Endothelial cell of umbilical vein (primary cell): ENCODE measurements at regions of chr6 and their contacts with region 1.

Region 1: DNA sequence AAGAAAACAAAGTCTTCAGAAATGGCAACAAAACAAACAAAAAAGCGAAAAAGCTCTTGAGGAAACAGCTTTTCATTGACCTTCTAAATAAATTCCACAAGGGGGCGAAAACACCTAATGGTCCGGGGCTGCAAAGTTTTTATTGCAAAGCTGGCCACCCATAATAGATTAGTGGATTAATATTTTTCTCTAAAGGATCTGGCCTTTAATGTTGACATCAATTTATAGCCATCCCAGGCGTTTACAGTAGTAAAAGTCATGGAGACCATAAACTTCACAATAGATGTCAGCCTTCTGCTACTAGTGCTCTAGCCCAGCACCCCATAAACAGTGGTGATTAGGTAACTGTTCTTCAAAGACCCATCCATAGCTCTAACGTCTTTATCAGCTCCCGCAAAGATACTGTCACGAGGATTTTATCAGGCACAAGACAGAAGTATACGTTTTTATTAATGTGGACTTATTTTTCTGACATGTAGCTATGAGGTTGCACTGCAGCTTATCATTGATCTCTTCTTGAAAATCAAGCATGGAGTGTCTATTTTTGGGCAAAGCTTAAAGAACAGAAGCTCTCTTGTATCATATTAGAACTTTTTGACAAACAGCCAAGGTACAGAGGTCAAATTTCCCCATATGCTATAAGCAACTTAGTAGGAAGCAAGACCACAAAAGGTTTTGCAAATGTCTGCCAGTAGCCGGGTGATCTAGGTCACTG is 4.7 kb downstream of the CITED2 start:
- DNase-seq: peak; percentile 68
- H3K4me3 ChIP-seq: no peak overlapping the region
- H3K27ac ChIP-seq: no peak overlapping the region
- H3K4me1 ChIP-seq: peaks cover 41% of the 10 kb centered on the region
- H3K27me3 ChIP-seq: no peaks in the 10 kb centered on the region
- CTCF ChIP-seq: peak; percentile 43 to 46
- POLR2A ChIP-seq: no peak

Region 2: DNA sequence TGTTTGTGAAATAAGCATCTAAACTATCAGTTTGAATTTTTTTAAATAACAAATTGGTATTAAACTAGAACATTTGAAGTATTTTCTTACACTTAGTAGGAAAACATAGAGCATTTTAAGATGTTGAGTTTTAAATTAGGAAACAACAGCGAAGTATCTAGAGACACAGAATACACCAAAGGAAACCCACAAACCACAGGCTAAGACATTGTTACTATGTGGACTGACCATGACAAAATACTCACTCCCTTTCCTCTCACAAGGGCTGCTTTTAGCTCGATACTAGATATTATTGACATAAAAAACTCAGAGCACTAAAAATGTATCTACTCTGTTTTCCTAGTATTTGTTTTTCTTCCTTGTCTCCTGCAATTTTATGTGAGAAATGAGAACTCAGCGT is 270.7 kb after region 1 on chr6:
- CTCF ChIA-PET with region 1: no interaction called
- POLR2A ChIA-PET with region 1: no interaction called
- dilution Hi-C with region 1: no loop called
- intact Hi-C with region 1: no loop called
- DNase-seq: no peak
- H3K4me3 ChIP-seq: no peak overlapping the region
- H3K27ac ChIP-seq: no peak overlapping the region
- H3K4me1 ChIP-seq: no peaks in the 10 kb centered on the region
- H3K27me3 ChIP-seq: no peaks in the 10 kb centered on the region
- CTCF ChIP-seq: no peak
- POLR2A ChIP-seq: no peak

Region 3: DNA sequence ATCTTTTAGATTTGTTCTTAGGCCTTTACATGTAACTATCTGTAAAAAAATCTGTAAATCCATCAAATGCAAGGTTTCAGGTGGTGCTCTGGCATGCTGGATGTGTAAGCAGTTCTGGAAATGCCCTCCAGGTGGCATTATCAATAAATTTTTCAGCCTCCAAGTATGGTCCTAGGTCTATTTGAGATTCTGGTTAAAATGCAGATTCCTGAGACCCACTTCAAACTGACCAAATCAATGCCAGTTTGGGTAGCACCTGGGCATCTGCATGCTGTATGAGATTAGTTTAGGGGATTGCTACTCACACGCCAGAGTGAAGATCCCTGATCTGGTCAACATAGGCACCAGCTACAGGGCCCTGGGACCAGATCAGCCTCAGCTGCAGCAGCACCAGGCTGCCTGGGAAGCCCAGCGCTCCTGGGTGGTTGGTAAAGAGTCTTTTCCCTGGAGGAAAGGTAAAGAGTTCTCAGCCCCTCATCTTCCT is 512.0 kb after region 1 on chr6:
- CTCF ChIA-PET with region 1: interaction called, 12 read pairs
- POLR2A ChIA-PET with region 1: interaction called, 3 read pairs
- dilution Hi-C with region 1: no loop called
- intact Hi-C with region 1: loop called (anchors 1 kb)
- DNase-seq: peak; percentile 69
- H3K4me3 ChIP-seq: no peak overlapping the region
- H3K27ac ChIP-seq: no peak overlapping the region
- H3K4me1 ChIP-seq: peaks cover 14% of the 10 kb centered on the region
- H3K27me3 ChIP-seq: no peaks in the 10 kb centered on the region
- CTCF ChIP-seq: peak; percentile 42 to 49
- POLR2A ChIP-seq: no peak

Region 4: DNA sequence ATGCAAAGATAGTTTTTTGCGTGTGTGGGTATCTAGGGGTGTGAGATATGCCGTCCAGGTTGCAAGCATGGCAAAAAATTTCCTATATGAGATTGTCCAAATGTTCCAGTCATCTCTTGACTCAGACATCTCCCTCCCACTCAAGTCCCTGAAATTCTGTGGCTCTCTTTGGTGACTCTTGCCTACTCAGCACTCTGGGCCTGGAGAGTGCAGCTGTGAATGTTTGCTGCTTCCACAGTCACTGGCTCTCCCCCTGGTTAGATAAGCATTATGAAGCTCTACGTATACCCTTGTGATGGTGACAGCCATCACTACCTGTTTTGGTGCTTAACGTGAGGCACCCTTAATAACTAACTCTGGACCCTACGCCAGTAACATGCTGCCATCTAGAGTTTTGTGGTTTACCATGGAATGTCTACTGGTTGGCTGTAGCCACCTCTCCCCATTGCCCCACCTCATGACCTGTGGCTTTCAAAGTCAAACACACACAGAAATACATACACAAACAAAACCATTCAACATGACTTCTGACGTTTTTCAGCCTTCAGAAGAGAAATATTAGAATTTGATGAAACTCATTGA is 626.6 kb after region 1 on chr6:
- CTCF ChIA-PET with region 1: interaction called, 7 read pairs
- POLR2A ChIA-PET with region 1: no interaction called
- dilution Hi-C with region 1: no loop called
- intact Hi-C with region 1: loop called (anchors 1 kb)
- DNase-seq: no peak
- H3K4me3 ChIP-seq: no peak overlapping the region
- H3K27ac ChIP-seq: no peak overlapping the region
- H3K4me1 ChIP-seq: no peaks in the 10 kb centered on the region
- H3K27me3 ChIP-seq: no peaks in the 10 kb centered on the region
- CTCF ChIP-seq: no peak
- POLR2A ChIP-seq: no peak

Region 5: DNA sequence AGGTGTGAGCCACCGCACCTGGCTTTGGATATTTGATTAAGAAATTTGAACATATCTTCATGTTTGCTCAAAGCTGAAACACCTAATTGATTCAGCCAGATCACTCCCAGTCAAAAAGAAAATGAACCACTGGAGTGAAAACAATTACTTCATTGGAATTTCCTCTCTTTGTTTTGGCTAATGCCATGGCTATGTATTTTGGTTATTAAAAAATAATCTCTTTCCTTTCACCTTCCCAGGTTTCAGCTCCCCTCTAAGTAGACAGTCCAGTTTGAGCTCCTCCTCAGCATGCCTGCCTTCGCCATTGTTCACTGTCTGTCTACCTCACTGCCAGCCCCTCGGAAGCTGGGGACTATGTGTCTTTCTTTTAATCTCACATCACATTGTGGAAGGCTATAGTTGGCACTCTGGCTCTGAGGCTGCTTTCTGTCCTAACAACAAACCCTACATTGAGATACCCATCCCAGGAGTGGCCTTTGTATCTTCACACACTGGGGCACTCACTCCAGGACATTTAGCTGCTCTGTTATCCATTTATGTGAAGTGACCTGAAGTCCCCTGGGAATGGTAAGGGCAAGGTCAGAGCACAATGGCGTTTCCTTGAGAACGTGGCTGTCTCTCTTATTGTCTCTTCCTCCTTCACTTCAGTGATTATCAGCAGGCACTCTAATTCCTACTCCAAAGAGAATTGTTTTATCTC is 768.7 kb after region 1 on chr6:
- CTCF ChIA-PET with region 1: interaction called, 10 read pairs
- POLR2A ChIA-PET with region 1: interaction called, 3 read pairs
- dilution Hi-C with region 1: no loop called
- intact Hi-C with region 1: loop called (anchors 2 kb)
- DNase-seq: peak; percentile 70
- H3K4me3 ChIP-seq: no peak overlapping the region
- H3K27ac ChIP-seq: peak overlapping the region; percentile 98
- H3K4me1 ChIP-seq: peaks cover 10% of the 10 kb centered on the region
- H3K27me3 ChIP-seq: no peaks in the 10 kb centered on the region
- CTCF ChIP-seq: no peak
- POLR2A ChIP-seq: no peak

Region 6: DNA sequence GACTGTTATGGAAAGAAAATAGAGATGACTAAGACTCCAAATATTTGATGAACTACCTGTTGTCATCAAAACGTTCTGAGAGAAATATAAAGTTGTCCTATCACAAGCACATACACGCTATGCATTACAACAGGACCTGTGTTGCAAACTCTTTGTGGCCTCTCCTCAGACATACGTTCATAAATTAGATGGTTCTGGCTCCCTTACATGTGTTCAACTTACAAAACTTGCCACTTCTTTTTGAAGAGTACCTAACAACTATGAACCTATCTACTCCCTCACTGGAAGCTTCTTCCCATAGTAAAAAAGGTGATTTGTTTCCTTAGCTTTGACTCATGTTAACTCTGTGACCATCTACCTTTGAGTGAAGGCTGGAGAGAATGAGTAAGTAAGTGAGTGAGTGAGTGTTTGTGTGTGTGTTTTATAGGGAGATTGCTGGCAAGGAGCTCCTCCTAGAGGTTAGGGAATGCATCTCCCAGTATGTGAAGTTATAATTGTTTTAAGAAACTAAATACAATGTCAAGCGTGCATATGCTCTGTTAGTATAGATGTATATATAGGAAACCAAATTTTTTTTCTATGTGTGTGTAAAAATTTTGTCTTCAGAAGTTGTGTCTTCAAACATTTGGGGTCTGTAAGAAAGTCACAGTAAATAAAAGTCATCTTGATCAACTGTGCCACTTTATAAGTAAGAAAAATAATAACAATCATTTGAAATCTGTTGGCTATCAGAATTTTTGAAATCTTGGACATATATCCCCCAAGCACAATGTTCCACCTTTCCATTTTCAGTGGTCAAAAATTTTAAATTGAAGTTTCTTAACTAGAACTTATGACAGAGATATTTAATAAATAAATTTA is 1551.9 kb after region 1 on chr6:
- CTCF ChIA-PET with region 1: interaction called, 32 read pairs
- POLR2A ChIA-PET with region 1: no interaction called
- dilution Hi-C with region 1: no loop called
- intact Hi-C with region 1: loop called (anchors 1 kb)
- DNase-seq: peak; percentile 89
- H3K4me3 ChIP-seq: no peak overlapping the region
- H3K27ac ChIP-seq: no peak overlapping the region
- H3K4me1 ChIP-seq: peaks cover 3% of the 10 kb centered on the region
- H3K27me3 ChIP-seq: no peaks in the 10 kb centered on the region
- CTCF ChIP-seq: peak; percentile 58 to 69
- POLR2A ChIP-seq: no peak